Thyroid gland (tissue), 4 donors: ENCODE measurements at regions of chr16 and their contacts with region 1.

Region 1: GRCh38 chr16:3861808-3862451 is 18.6 kb downstream of the CREBBP start:
- DNase-seq: no peak
- H3K4me3 ChIP-seq: no peak overlapping the region
- H3K27ac ChIP-seq: peak overlapping the region in 1 of 3 donors; percentile 43
- H3K4me1 ChIP-seq: peaks cover 45 to 69% of the 10 kb centered on the region in 2 donors
- H3K27me3 ChIP-seq: no peaks in the 10 kb centered on the region
- CTCF ChIP-seq: no peak
- POLR2A ChIP-seq: no peak

Region 2: DNA sequence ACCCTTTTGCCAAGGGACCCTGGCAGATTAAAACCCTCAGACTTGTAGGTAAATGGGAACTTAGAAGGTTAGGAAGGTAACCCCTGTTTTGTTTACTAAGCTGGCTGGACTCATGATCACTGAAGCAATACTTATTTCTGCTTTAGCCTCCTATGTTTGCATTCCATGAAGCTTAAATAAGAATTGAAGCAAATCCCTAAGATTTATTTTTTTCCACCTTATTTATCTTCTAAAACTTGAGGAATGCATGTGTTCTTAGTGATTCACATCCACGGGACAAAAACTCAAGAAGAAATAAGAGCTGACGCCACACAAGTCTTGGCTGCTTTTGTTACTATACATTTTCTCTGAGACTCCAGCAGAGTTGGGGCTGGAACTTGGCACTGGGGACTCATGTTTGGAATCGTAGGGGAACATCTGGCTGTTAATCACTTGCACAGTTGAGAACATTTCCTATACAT is 325.6 kb before region 1 on chr16:
- intact Hi-C with region 1: loop called (anchors 10 kb)
- DNase-seq: no peak
- H3K4me3 ChIP-seq: no peak overlapping the region
- H3K27ac ChIP-seq: peak overlapping the region in 2 of 3 donors; percentile 62 to 67
- H3K4me1 ChIP-seq: peaks cover 0 to 9% of the 10 kb centered on the region in 2 donors
- H3K27me3 ChIP-seq: no peaks in the 10 kb centered on the region
- CTCF ChIP-seq: no peak
- POLR2A ChIP-seq: no peak